ENCODE measurements at regions of chr12 and their contacts with region 1.

Region 1: GRCh38 chr12:6904280-6905278 is at the start of gene LRRC23:
- DNase-seq: peak; percentile 93
- ATAC-seq: peak; percentile 94
- H3K4me3 Mint-ChIP-seq: no peak within 1 kb of the TSS
- H3K27ac Mint-ChIP-seq: no peak within 1 kb of the TSS
- H3K4me1 Mint-ChIP-seq: peaks cover 11% of the 10 kb centered on the region
- H3K27me3 Mint-ChIP-seq: no peaks in the 10 kb centered on the region
- total RNA-seq, gene LRRC23: 8.1 to 8.3 TPM

Region 2: DNA sequence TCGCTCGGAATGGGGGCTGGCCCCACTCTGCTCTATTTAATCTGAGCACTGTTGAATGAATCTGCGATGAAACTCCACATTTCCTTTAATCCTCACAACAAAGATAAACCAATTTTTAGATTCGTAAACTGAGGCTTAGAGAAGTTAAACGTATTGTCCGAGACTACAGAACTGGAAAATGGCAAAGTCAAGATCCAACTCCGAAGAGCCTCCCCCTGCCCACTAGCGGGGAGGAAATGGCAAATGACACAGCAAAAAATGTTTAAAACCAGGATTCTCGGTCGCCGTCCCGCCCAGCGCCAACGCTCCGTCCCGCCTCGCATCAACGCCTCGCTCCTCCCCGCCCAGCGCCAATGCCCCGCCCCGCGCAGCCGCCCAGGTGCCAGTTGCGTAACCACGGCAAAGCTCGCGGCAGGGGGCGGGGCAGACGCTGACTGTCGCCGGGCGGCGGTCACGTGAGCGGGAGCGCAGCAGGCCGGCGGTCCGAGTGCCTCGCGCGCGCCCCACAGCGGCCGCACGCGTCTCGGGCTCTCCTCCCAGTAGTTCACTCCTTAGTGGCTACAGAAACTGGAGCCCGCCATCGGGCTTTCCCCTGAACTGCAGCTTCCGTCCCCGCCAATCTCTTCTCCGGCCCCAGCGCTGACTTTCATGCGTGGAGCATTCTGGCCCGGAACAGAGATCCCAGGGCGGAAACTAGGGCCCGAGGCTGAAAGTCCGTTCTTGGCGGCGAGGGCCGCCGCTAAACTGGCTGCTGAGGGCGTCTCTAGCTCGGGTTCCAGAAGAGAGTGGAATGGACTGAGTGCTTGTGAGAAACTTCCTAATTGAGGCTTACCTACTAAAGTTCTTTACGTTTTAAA is 13.6 kb before region 1 on chr12:
- POLR2A ChIA-PET with region 1: interaction called, 17 read pairs
- DNase-seq: peak; percentile 100
- ATAC-seq: peak; percentile 97
- H3K4me3 Mint-ChIP-seq: peak overlapping the region; percentile 88
- H3K27ac Mint-ChIP-seq: peak overlapping the region; percentile 91
- H3K4me1 Mint-ChIP-seq: peaks cover 17% of the 10 kb centered on the region
- H3K27me3 Mint-ChIP-seq: no peaks in the 10 kb centered on the region

Region 3: DNA sequence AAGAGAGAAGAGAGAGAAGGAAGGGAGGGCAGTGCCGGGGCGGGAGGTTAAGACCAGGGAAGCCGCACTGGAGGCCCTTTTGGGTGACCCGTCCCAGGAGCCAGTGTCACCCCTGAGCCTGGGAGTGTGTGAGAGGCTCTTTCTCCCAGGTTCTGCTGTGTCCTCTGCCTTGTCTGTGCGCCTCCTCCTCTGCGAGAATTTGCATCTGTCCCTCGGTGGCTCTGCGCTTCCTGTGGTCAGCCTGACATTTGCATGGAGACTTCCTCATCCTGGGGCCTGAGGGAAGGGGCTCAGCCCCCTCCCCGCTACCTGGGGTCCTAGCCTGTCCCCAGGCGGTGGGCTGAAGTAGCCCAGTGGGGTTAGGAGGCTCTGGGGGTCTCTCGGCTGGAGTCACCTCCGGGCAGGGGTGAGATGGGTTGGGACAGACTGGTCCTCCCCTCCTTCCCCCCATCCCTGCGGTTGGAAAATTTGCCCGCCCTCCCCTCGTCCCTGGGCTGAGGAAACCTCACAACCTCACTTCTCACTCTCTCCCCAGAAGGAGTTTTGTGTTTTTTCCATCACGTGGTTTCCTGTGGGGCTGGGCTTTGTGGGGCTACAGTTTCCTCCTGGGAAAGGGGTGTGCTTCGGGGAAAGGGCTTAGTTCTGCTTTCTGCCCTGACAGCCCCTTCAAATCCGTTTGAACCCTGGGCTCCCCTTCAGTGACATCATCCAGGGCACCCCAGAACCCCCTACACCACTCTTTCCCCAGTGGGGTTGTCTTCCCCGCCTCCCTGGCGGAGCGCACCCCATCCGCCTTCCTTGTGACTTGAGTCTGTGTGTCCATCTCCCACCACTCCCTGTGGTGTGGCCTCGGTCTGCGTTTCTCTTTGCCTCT is 49.1 kb after region 1 on chr12:
- POLR2A ChIA-PET with region 1: no interaction called
- DNase-seq: peak; percentile 78
- ATAC-seq: peak; percentile 23
- H3K4me3 Mint-ChIP-seq: peak overlapping the region; percentile 100
- H3K27ac Mint-ChIP-seq: peak overlapping the region; percentile 100
- H3K4me1 Mint-ChIP-seq: peaks cover 72% of the 10 kb centered on the region
- H3K27me3 Mint-ChIP-seq: no peaks in the 10 kb centered on the region

Measured in activated naive CD8-positive, alpha-beta T cell treated with anti-CD3 and anti-CD28 coated beads, Interleukin-2, amount 10 ng/mL, durations not matched to agents 7 days and 5 days (primary cell).